ENCODE measurements at regions of chr4 and their contacts with region 1.

Region 1: GRCh38 chr4:149370785-149371420 is 444.7 kb downstream of the IQCM start:
- DNase-seq: no peak
- ATAC-seq: no peak
- H3K4me3 ChIP-seq: no peak overlapping the region
- H3K27ac ChIP-seq: no peak overlapping the region
- H3K4me1 ChIP-seq: peaks cover 0 to 2% of the 10 kb centered on the region in 2 donors
- H3K27me3 ChIP-seq: no peaks in the 10 kb centered on the region

Region 2: GRCh38 chr4:149264093-149264733 is 106.7 kb before region 1 on chr4:
- intact Hi-C with region 1: no loop called
- DNase-seq: no peak
- ATAC-seq: no peak
- H3K4me3 ChIP-seq: no peak overlapping the region
- H3K27ac ChIP-seq: no peak overlapping the region
- H3K4me1 ChIP-seq: no peaks in the 10 kb centered on the region
- H3K27me3 ChIP-seq: no peaks in the 10 kb centered on the region

Region 3: GRCh38 chr4:149897783-149898182 is 526.9 kb after region 1 on chr4:
- intact Hi-C with region 1: loop called in 1 of 2 experiments (anchors 5 kb)
- DNase-seq: no peak
- ATAC-seq: no peak
- H3K4me3 ChIP-seq: no peak overlapping the region
- H3K27ac ChIP-seq: no peak overlapping the region
- H3K4me1 ChIP-seq: no peaks in the 10 kb centered on the region
- H3K27me3 ChIP-seq: no peaks in the 10 kb centered on the region